Body of pancreas (tissue), 4 donors: ENCODE measurements at regions of chr1 and their contacts with region 1.

Region 1: GRCh38 chr1:225766967-225767633 is 10.5 kb upstream of the SRP9 start:
- DNase-seq: peak in 2 of 4 donors; percentile 35 to 38
- ATAC-seq: no peak
- H3K4me3 ChIP-seq: no peak overlapping the region
- H3K27ac ChIP-seq: peak overlapping the region; percentile 12 to 82 (median 58)
- H3K4me1 ChIP-seq: peaks cover 52% of the 10 kb centered on the region
- H3K27me3 ChIP-seq: no peaks in the 10 kb centered on the region
- CTCF ChIP-seq: no peak
- POLR2A ChIP-seq: no peak

Region 2: GRCh38 chr1:225437710-225438437 is 329.2 kb before region 1 on chr1:
- intact Hi-C with region 1: no loop called
- DNase-seq: no peak
- ATAC-seq: no peak
- H3K4me3 ChIP-seq: no peak overlapping the region
- H3K27ac ChIP-seq: no peak overlapping the region
- H3K4me1 ChIP-seq: peaks cover 30% of the 10 kb centered on the region
- H3K27me3 ChIP-seq: no peaks in the 10 kb centered on the region
- CTCF ChIP-seq: peak in 3 of 7 experiments; percentile 6 to 28 (median 12)
- POLR2A ChIP-seq: no peak

Region 3: DNA sequence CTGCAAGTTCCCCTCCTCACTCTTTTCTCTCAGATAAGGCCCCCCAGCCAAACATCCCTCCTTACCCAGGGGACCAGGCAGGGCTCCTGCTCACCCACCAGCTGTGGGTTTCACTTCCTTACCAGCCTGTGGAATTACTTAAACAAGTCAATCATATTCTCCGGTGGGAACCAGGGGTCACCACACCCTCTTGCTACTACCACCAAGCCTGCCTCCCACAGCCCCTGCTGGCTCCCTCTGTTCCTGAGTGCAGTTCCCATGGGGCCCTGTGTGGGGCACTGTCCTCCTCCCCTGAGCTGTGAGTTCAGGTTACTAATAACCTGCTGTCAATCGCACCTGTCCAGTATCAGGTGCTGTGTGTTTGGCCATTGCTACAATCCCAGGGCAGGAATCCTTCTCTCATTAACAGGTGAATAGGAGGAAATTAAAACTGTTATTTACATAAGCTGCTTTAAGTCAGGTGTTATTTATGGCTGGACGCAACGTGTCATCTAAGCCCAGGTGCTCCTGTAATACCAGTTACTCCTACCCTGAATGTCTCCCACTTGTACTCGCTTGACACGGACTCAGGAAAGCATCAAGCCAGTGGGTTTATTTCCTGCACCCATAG is 286.2 kb before region 1 on chr1:
- intact Hi-C with region 1: loop called (anchors 10 kb)
- DNase-seq: peak; percentile 73 to 86 (median 82)
- ATAC-seq: peak; percentile 94
- H3K4me3 ChIP-seq: no peak overlapping the region
- H3K27ac ChIP-seq: peak overlapping the region in 3 of 4 donors; percentile 15 to 41 (median 21)
- H3K4me1 ChIP-seq: peaks cover 9% of the 10 kb centered on the region
- H3K27me3 ChIP-seq: no peaks in the 10 kb centered on the region
- CTCF ChIP-seq: peak; percentile 74 to 94 (median 81)
- POLR2A ChIP-seq: no peak

Region 4: GRCh38 chr1:225652729-225653462 is 114.2 kb before region 1 on chr1 and contains the start of gene ENAH:
- intact Hi-C with region 1: loop called (anchors 10 kb)
- DNase-seq: peak; percentile 83 to 89 (median 87)
- ATAC-seq: peak; percentile 85
- H3K4me3 ChIP-seq: peak within 1 kb of the TSS; percentile 83 to 96
- H3K27ac ChIP-seq: peak within 1 kb of the TSS; percentile 86 to 97 (median 94)
- H3K4me1 ChIP-seq: peaks cover 39% of the 10 kb centered on the region
- H3K27me3 ChIP-seq: no peaks in the 10 kb centered on the region
- CTCF ChIP-seq: peak in 1 of 7 experiments; percentile 22
- POLR2A ChIP-seq: peak in 2 of 3 donors; percentile 21 to 56
- total RNA-seq, gene ENAH: 21.1 to 28.8 TPM